Breast epithelium (tissue), 4 donors: ENCODE measurements at regions of chr20 and their contacts with region 1.

Region 1: DNA sequence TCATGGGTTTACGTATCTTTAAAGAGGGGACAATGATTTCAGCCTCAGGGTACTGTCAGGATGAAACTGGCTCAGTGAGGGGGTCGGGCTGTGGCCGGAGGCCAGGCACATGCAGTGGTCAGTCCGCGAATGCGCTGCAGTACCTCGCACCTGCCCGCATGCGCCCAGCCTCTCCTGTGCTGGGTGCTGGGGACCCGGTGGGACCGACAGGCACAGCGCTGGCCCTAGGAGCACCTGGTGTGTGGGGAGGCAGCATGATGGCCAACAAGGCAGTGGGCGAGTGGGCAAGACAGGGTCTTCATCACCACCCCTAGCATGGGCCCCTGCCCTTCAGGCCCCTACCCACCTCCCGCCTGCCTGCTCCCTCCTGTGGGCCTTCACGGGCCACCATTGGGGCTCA is 970 bp upstream of the CABLES2 start:
- DNase-seq: no peak
- H3K4me3 ChIP-seq: no peak overlapping the region
- H3K27ac ChIP-seq: no peak overlapping the region
- H3K4me1 ChIP-seq: peaks cover 11 to 32% of the 10 kb centered on the region in 2 donors
- H3K27me3 ChIP-seq: no peaks in the 10 kb centered on the region
- CTCF ChIP-seq: no peak
- POLR2A ChIP-seq: no peak

Region 2: DNA sequence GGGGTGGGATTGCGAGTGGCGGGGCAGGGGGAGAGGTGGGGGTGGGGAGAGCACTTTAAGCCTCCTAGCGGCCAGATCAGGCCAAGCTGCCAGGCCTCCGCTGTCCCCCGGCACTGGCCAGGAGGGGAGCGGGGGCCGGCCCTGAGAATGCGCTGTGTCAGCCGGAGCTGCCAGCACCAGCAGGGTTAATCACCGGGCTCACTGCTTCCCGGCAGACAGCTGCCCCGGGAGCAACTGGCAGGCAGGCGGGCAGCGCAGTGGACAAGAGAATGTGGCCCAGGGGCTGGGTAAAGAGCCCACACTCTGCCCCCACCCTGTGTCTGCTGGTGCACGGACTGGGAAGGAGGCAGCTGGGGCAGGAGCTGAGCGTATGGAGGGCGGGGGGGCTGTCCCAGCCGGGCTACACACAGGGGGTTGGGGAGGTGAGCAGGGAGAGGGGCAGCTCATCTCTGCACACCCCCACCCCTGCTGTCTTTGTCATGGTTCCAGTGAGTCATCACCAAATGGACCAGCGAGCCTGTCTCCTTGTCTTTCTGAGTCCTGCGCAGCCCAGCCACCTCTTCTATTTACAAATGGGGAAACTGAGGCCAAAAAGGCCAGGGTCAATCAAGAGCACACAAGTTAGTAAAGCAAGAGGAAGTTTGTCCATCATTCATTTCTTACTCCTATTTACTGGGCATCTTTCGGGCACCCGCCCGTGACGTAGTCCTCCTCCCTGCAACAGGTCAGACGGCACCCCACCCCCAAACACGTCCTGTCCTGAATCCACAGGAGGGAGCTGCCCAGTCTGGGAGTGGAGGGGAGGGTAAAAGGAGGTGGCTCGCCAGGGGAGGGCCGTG is 38.9 kb before region 1 on chr20:
- intact Hi-C with region 1: no loop called
- DNase-seq: no peak
- H3K4me3 ChIP-seq: peak overlapping the region in 2 of 3 donors; percentile 83 to 86
- H3K27ac ChIP-seq: peak overlapping the region; percentile 55 to 91
- H3K4me1 ChIP-seq: peaks cover 35 to 43% of the 10 kb centered on the region in 2 donors
- H3K27me3 ChIP-seq: no peaks in the 10 kb centered on the region
- CTCF ChIP-seq: no peak
- POLR2A ChIP-seq: no peak

Region 3: GRCh38 chr20:62452475-62453081 is 44.5 kb after region 1 on chr20:
- intact Hi-C with region 1: loop called (anchors 1 kb)
- DNase-seq: no peak
- H3K4me3 ChIP-seq: no peak overlapping the region
- H3K27ac ChIP-seq: no peak overlapping the region
- H3K4me1 ChIP-seq: no peaks in the 10 kb centered on the region
- H3K27me3 ChIP-seq: peaks cover 3 to 63% of the 10 kb centered on the region in 2 donors
- CTCF ChIP-seq: no peak
- POLR2A ChIP-seq: no peak